HCT116 (cell line): ENCODE measurements at regions of chr17 and their contacts with region 1.

Region 1: DNA sequence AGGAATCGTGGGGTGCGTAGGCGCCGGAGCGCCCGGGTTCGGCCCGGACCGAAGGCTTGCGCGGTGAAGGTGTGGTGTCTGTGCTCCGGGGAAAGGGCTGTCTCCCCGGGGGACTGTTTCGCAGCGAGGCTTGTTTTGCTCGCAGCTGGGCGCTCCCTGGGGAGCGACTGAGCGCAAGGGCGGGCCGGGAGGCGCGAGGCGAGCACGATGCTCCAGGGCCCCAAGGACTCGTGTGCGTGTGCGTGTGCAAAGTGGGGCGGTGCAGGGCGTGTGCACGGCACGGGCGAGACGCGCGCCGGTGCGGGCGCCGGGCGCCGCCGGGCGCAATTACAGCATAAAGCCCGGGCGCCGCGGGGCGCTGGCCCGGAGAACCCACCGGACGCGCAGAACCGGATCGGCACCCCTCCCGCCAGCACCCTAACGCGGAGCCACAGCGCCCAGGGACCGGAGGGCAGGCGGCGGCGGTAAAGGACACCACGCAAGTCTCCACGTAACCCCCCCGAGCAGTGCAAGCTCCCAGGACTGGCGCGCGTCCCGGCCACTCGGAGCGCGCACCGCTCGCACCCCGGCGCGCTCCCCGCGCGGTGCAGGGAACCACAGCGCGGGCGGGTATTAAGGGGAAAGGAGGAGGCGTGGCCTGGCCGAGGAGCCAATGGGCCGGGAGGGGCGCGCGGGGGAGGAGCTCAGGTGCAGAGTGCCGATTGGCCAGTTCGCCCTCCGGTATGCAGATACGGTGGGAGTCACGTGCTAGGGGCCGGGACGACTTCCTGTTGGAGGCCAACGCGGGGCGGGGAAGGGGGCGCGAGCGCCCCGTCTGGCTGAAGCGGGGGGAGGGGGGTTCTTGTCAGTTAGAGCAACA is at the start of gene TNRC6C:
- DNase-seq: peak; percentile 98
- ATAC-seq: peak; percentile 97
- H3K4me3 ChIP-seq: peak within 1 kb of the TSS; percentile 62 to 67
- H3K27ac ChIP-seq: peak within 1 kb of the TSS; percentile 75; the same call in 1 of the 2 replicates
- H3K4me1 ChIP-seq: peaks cover 12 to 15% of the 10 kb centered on the region in 2 experiments
- H3K27me3 ChIP-seq: peaks cover 7% of the 10 kb centered on the region; the same call in 1 of the 2 replicates
- CTCF ChIP-seq: 0 out of 6 replicates have a peak, but pooled peaks of 1 of the 3 experiments have one; percentile 10
- POLR2A ChIP-seq: peak; percentile 99
- RAD21 ChIP-seq: no peak
- total RNA-seq, gene TNRC6C: 23.4 TPM

Region 2: GRCh38 chr17:77772461-77772897 is 185.6 kb before region 1 on chr17:
- CTCF ChIA-PET with region 1: no interaction called
- POLR2A ChIA-PET with region 1: interaction called, 5 read pairs
- RAD21 ChIA-PET with region 1: no interaction called
- intact Hi-C with region 1: loop called (anchors 5 kb)
- DNase-seq: peak; percentile 32
- ATAC-seq: peak; percentile 99
- H3K4me3 ChIP-seq: no peak overlapping the region
- H3K27ac ChIP-seq: no peak overlapping the region
- H3K4me1 ChIP-seq: peaks cover 0 to 19% of the 10 kb centered on the region in 2 experiments; a peak in 2 of 4 replicates
- H3K27me3 ChIP-seq: no peaks in the 10 kb centered on the region; the same call in 1 of the 2 replicates
- CTCF ChIP-seq: peak; percentile 87 to 99 (median 95); a peak in 5 of 6 replicates
- POLR2A ChIP-seq: no peak
- RAD21 ChIP-seq: peak; percentile 99

Region 3: DNA sequence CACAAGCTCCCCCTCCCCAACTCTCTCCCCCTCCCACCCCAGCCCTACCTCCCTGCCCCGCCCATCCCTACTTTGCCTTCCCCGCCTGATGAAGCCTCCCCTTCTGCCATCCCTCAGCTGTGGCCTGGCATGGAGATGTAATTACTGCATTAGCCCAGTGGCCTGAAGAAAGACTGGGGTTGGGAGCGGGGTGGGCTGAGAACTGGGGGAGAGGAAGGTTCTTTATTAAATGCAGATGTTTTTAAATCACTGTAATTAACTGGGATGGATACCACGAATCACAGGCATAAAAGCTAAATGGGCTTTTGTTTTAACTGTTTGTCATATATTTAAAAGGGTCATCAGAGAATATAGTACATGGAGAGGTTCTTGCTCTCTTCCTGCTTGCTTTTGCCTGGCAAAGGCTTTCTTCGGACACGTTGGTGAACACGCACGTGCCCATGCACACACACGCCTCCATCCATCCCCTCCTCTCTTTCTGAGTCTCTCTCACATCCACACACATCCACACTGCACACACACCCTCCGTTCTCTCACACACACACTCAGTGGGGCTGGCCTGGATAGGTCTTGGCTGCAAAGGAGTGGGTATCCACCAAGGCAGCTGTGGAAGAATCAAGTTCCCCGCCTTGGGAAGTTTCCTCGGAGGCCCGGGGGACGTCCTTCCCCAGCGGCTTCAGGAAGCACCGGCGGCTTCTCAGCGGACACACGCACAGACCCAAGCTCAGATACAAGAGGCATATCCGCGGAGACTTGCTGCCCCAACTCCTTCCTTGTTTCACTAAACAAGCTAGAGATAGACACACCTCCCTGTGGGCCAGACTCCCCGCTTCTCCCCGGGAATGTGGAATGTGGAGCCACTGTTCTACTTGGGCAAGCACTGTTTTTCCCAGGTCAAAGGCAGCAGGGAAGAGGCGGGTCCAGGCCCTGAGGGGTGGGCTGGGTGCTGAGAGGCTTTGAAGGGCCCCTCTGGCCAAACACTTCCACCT is 27.0 kb before region 1 on chr17:
- CTCF ChIA-PET with region 1: interaction called, 4 read pairs
- POLR2A ChIA-PET with region 1: interaction called, 16 read pairs
- RAD21 ChIA-PET with region 1: no interaction called
- intact Hi-C with region 1: no loop called
- DNase-seq: no peak
- ATAC-seq: no peak
- H3K4me3 ChIP-seq: no peak overlapping the region
- H3K27ac ChIP-seq: no peak overlapping the region
- H3K4me1 ChIP-seq: no peaks in the 10 kb centered on the region
- H3K27me3 ChIP-seq: peaks cover 14% of the 10 kb centered on the region; the same call in 1 of the 2 replicates
- CTCF ChIP-seq: no peak
- POLR2A ChIP-seq: no peak
- RAD21 ChIP-seq: no peak

Region 4: GRCh38 chr17:77936881-77937280 is 21.2 kb before region 1 on chr17:
- CTCF ChIA-PET with region 1: interaction called, 3 read pairs
- POLR2A ChIA-PET with region 1: interaction called, 16 read pairs
- RAD21 ChIA-PET with region 1: no interaction called
- intact Hi-C with region 1: no loop called
- DNase-seq: no peak
- ATAC-seq: no peak
- H3K4me3 ChIP-seq: no peak overlapping the region
- H3K27ac ChIP-seq: no peak overlapping the region
- H3K4me1 ChIP-seq: no peaks in the 10 kb centered on the region
- H3K27me3 ChIP-seq: no peaks in the 10 kb centered on the region
- CTCF ChIP-seq: no peak
- POLR2A ChIP-seq: no peak
- RAD21 ChIP-seq: no peak

Region 5: DNA sequence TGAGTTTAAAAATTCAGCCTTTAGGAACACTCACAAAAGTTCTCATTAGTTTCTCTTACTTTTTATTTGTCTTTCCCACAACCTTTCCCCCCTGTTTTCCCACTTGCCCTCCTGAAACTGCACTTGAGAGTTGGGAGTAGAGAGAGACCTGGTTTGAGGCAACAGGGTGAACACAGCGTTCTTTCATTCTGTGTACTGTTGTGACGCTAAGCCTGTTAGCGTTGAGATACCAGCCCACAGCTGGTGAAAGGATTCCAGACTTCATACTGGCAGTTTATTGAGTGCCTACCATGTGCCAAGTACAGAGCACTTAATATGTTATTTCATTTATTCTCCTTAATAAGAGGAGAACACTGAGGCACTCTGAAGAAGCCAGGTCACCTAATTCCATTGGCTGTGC is 10.7 kb after region 1 on chr17:
- CTCF ChIA-PET with region 1: interaction called, 9 read pairs
- POLR2A ChIA-PET with region 1: interaction called, 33 read pairs
- RAD21 ChIA-PET with region 1: interaction called in 1 of 2 experiments, 3 read pairs
- intact Hi-C with region 1: no loop called
- DNase-seq: no peak
- ATAC-seq: no peak
- H3K4me3 ChIP-seq: no peak overlapping the region
- H3K27ac ChIP-seq: no peak overlapping the region
- H3K4me1 ChIP-seq: peaks cover 0 to 2% of the 10 kb centered on the region in 2 experiments; a peak in 1 of 4 replicates
- H3K27me3 ChIP-seq: no peaks in the 10 kb centered on the region
- CTCF ChIP-seq: no peak
- POLR2A ChIP-seq: no peak
- RAD21 ChIP-seq: no peak

Region 6: GRCh38 chr17:77974396-77974795 is 16.3 kb after region 1 on chr17:
- CTCF ChIA-PET with region 1: interaction called, 9 read pairs
- POLR2A ChIA-PET with region 1: interaction called, 33 read pairs
- RAD21 ChIA-PET with region 1: interaction called in 1 of 2 experiments, 3 read pairs
- intact Hi-C with region 1: no loop called
- DNase-seq: no peak
- ATAC-seq: no peak
- H3K4me3 ChIP-seq: no peak overlapping the region
- H3K27ac ChIP-seq: no peak overlapping the region
- H3K4me1 ChIP-seq: no peaks in the 10 kb centered on the region
- H3K27me3 ChIP-seq: no peaks in the 10 kb centered on the region
- CTCF ChIP-seq: no peak
- POLR2A ChIP-seq: no peak
- RAD21 ChIP-seq: no peak